ENCODE measurements at regions of chr4 and their contacts with region 1.

Region 1: GRCh38 chr4:10554694-10555093 is 97.5 kb upstream of the ZNF518B start:
- DNase-seq: peak; percentile 79
- H3K4me3 Mint-ChIP-seq: no peak overlapping the region
- H3K27ac Mint-ChIP-seq: no peak overlapping the region
- H3K4me1 Mint-ChIP-seq: no peaks in the 10 kb centered on the region
- H3K27me3 Mint-ChIP-seq: no peaks in the 10 kb centered on the region
- CTCF ChIP-seq: peak; percentile 53

Region 2: GRCh38 chr4:9762823-9763475 is 791.7 kb before region 1 on chr4:
- CTCF ChIA-PET with region 1: interaction called, 3 read pairs
- POLR2A ChIA-PET with region 1: no interaction called
- intact Hi-C with region 1: loop called (anchors 1 kb)
- DNase-seq: peak; percentile 81
- H3K4me3 Mint-ChIP-seq: no peak overlapping the region
- H3K27ac Mint-ChIP-seq: no peak overlapping the region
- H3K4me1 Mint-ChIP-seq: peaks cover 5% of the 10 kb centered on the region
- H3K27me3 Mint-ChIP-seq: peaks cover 28% of the 10 kb centered on the region
- CTCF ChIP-seq: peak; percentile 74

Region 3: GRCh38 chr4:9952415-9952950 is 602.2 kb before region 1 on chr4:
- CTCF ChIA-PET with region 1: no interaction called
- POLR2A ChIA-PET with region 1: no interaction called
- intact Hi-C with region 1: no loop called
- DNase-seq: peak; percentile 46
- H3K4me3 Mint-ChIP-seq: no peak overlapping the region
- H3K27ac Mint-ChIP-seq: no peak overlapping the region
- H3K4me1 Mint-ChIP-seq: peaks cover 5% of the 10 kb centered on the region
- H3K27me3 Mint-ChIP-seq: no peaks in the 10 kb centered on the region
- CTCF ChIP-seq: no peak

Region 4: GRCh38 chr4:10074767-10075105 is 480.0 kb before region 1 on chr4:
- CTCF ChIA-PET with region 1: no interaction called
- POLR2A ChIA-PET with region 1: no interaction called
- intact Hi-C with region 1: loop called (anchors 5 kb)
- DNase-seq: peak; percentile 68
- H3K4me3 Mint-ChIP-seq: no peak overlapping the region
- H3K27ac Mint-ChIP-seq: no peak overlapping the region
- H3K4me1 Mint-ChIP-seq: no peaks in the 10 kb centered on the region
- H3K27me3 Mint-ChIP-seq: no peaks in the 10 kb centered on the region
- CTCF ChIP-seq: peak; percentile 39

Region 5: DNA sequence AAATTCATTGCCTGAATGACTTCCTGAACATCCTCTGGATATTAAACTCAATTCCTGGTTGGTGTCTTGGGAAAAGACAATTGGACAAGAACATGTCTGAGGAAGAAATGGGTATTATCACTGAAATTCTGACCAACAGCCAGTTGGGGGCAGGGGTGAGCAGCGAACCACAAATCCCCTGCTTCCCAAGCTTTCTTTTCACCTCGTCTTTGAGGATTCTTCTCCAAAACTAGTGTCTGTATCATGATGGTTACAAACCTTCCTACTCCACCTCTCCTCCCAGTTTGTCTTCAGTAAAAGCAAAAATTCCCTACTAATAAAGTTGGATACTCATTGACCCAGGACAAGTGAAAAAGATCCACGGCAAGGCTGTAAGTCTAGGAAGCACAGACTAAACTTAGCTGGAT is 389.8 kb before region 1 on chr4:
- CTCF ChIA-PET with region 1: interaction called, 77 read pairs
- POLR2A ChIA-PET with region 1: no interaction called
- intact Hi-C with region 1: loop called (anchors 2 kb)
- DNase-seq: peak; percentile 63
- H3K4me3 Mint-ChIP-seq: no peak overlapping the region
- H3K27ac Mint-ChIP-seq: no peak overlapping the region
- H3K4me1 Mint-ChIP-seq: peaks cover 6% of the 10 kb centered on the region
- H3K27me3 Mint-ChIP-seq: no peaks in the 10 kb centered on the region
- CTCF ChIP-seq: peak; percentile 54

Region 6: DNA sequence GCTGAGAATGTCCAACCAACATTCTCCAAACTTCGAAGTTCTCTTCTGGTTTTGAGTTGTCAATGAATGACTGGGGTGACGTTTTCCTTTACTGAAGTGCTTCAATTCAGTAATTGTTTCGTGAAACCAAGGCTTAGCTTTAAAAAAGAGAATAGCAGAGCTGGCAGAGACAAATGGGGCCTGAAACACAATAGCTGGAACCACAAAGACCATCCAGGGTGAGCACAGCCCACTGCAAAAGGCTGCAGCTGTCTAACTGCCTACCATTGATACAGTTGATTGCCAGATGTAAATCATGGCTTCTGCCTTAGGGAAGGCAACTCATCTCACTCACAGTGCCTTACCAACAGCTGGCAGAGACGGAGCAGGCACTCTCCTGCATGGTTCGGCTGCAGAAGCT is 18.8 kb before region 1 on chr4:
- CTCF ChIA-PET with region 1: interaction called, 29 read pairs
- POLR2A ChIA-PET with region 1: no interaction called
- intact Hi-C with region 1: no loop called
- DNase-seq: no peak
- H3K4me3 Mint-ChIP-seq: no peak overlapping the region
- H3K27ac Mint-ChIP-seq: no peak overlapping the region
- H3K4me1 Mint-ChIP-seq: peaks cover 2% of the 10 kb centered on the region
- H3K27me3 Mint-ChIP-seq: no peaks in the 10 kb centered on the region
- CTCF ChIP-seq: no peak

Region 7: GRCh38 chr4:10629394-10629793 is 74.7 kb after region 1 on chr4:
- CTCF ChIA-PET with region 1: no interaction called
- POLR2A ChIA-PET with region 1: no interaction called
- intact Hi-C with region 1: no loop called
- DNase-seq: no peak
- H3K4me3 Mint-ChIP-seq: no peak overlapping the region
- H3K27ac Mint-ChIP-seq: no peak overlapping the region
- H3K4me1 Mint-ChIP-seq: no peaks in the 10 kb centered on the region
- H3K27me3 Mint-ChIP-seq: no peaks in the 10 kb centered on the region
- CTCF ChIP-seq: no peak

Region 8: GRCh38 chr4:11428899-11429698 is 874.4 kb after region 1 on chr4:
- CTCF ChIA-PET with region 1: interaction called, 6 read pairs
- POLR2A ChIA-PET with region 1: no interaction called
- intact Hi-C with region 1: loop called (anchors 10 kb)
- DNase-seq: peak; percentile 88
- H3K4me3 Mint-ChIP-seq: peak overlapping the region; percentile 83
- H3K27ac Mint-ChIP-seq: no peak overlapping the region
- H3K4me1 Mint-ChIP-seq: peaks cover 10% of the 10 kb centered on the region
- H3K27me3 Mint-ChIP-seq: peaks cover 11% of the 10 kb centered on the region
- CTCF ChIP-seq: peak; percentile 81